ENCODE measurements at regions of chr7 and their contacts with region 1.

Region 1: GRCh38 chr7:74401137-74401859 is 52.4 kb upstream of the GTF2IRD1 start:
- DNase-seq: peak in 1 of 2 donors; percentile 41
- ATAC-seq: peak; percentile 65 to 71
- H3K4me3 ChIP-seq: no peak overlapping the region
- H3K27ac ChIP-seq: no peak overlapping the region
- H3K4me1 ChIP-seq: no peaks in the 10 kb centered on the region
- H3K27me3 ChIP-seq: no peaks in the 10 kb centered on the region
- CTCF ChIP-seq: peak; percentile 85 to 99 (median 95)
- POLR2A ChIP-seq: no peak

Region 2: GRCh38 chr7:73865738-73866445 is 535.4 kb before region 1 on chr7:
- in situ Hi-C with region 1: no loop called
- intact Hi-C with region 1: loop called (anchors 5 kb)
- DNase-seq: no peak
- ATAC-seq: peak; percentile 58 to 64
- H3K4me3 ChIP-seq: no peak overlapping the region
- H3K27ac ChIP-seq: no peak overlapping the region
- H3K4me1 ChIP-seq: peaks cover 0 to 3% of the 10 kb centered on the region in 2 donors
- H3K27me3 ChIP-seq: no peaks in the 10 kb centered on the region
- CTCF ChIP-seq: peak; percentile 28 to 58 (median 56)
- POLR2A ChIP-seq: no peak

Region 3: GRCh38 chr7:74068393-74069085 is 332.8 kb before region 1 on chr7:
- in situ Hi-C with region 1: loop called (anchors 5 to 25 kb)
- intact Hi-C with region 1: loop called (anchors 1 kb)
- DNase-seq: no peak
- ATAC-seq: no peak
- H3K4me3 ChIP-seq: no peak overlapping the region
- H3K27ac ChIP-seq: no peak overlapping the region
- H3K4me1 ChIP-seq: no peaks in the 10 kb centered on the region
- H3K27me3 ChIP-seq: no peaks in the 10 kb centered on the region
- CTCF ChIP-seq: no peak
- POLR2A ChIP-seq: no peak

Region 4: GRCh38 chr7:74254129-74254857 is 147.0 kb before region 1 on chr7 and contains the start of gene RFC2:
- in situ Hi-C with region 1: no loop called
- intact Hi-C with region 1: loop called (anchors 10 kb)
- DNase-seq: peak; percentile 91 to 95
- ATAC-seq: peak; percentile 97
- H3K4me3 ChIP-seq: peak within 1 kb of the TSS; percentile 72 to 90 (median 84)
- H3K27ac ChIP-seq: peak within 1 kb of the TSS; percentile 84 to 91 (median 86)
- H3K4me1 ChIP-seq: peaks cover 12 to 18% of the 10 kb centered on the region in 2 donors
- H3K27me3 ChIP-seq: no peaks in the 10 kb centered on the region
- CTCF ChIP-seq: peak; percentile 42 to 71 (median 46)
- POLR2A ChIP-seq: peak; percentile 61 to 64
- total RNA-seq, gene RFC2: 8.2 to 15.2 (median 12.7) TPM

Region 5: DNA sequence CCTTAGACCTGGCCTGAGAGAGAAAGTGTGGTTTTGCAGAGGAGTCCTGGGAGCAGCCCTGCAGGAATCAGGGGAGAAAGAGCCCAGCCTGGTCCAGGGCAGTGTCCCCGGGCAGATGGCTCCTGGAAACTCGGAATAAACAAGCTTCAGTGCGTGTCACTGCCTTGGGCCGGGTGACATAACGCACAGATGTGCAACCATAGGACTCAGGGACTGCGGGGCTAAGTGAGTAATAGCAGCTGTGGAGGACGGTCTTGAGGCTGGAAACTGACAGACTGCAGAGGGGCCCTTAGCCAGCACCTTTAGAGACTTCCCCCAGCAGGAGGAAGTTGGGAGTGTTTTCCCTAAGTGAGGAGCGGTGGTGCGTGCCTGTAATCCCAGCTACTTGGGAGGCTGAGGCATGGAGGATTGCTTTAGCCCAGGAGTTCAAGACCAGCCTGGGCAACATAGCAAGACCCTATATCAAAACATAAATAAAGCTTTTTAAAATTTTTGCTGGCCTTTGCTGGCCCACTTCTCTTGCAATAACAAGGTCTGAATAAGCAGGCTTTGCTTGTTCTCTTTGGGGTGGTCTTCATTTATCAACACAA is 117.3 kb before region 1 on chr7:
- in situ Hi-C with region 1: no loop called
- intact Hi-C with region 1: no loop called
- DNase-seq: no peak
- ATAC-seq: no peak
- H3K4me3 ChIP-seq: no peak overlapping the region
- H3K27ac ChIP-seq: no peak overlapping the region
- H3K4me1 ChIP-seq: peaks cover 5 to 12% of the 10 kb centered on the region in 2 donors
- H3K27me3 ChIP-seq: no peaks in the 10 kb centered on the region
- CTCF ChIP-seq: no peak
- POLR2A ChIP-seq: no peak

Region 6: GRCh38 chr7:75033050-75033449 is 631.8 kb after region 1 on chr7:
- in situ Hi-C with region 1: loop called in 1 of 4 experiments (anchors 25 kb)
- intact Hi-C with region 1: no loop called
- DNase-seq: no peak
- ATAC-seq: peak; percentile 22 to 27
- H3K4me3 ChIP-seq: no peak overlapping the region
- H3K27ac ChIP-seq: no peak overlapping the region
- H3K4me1 ChIP-seq: no peaks in the 10 kb centered on the region
- H3K27me3 ChIP-seq: no peaks in the 10 kb centered on the region
- CTCF ChIP-seq: no peak
- POLR2A ChIP-seq: no peak